Activated T-helper 1 cell treated with anti-CD3 and anti-CD28 coated beads, Interleukin-12 subunit alpha, Interleukin-12 subunit beta, Interleukin-2, Interleukin-4 antibody, amounts not matched to agents 30 ng/mL and 10 ng/mL and 1 ng/mL, durations not matched to agents 14 hours and 24 hours and 36 hours (primary cell): ENCODE measurements at regions of chr4 and their contacts with region 1.

Region 1: GRCh38 chr4:1512738-1513660 is 106.8 kb upstream of the NKX1-1 start:
- DNase-seq: peak; percentile 27
- H3K4me3 Mint-ChIP-seq: no peak overlapping the region
- H3K27ac Mint-ChIP-seq: no peak overlapping the region
- H3K4me1 Mint-ChIP-seq: no peaks in the 10 kb centered on the region
- H3K27me3 Mint-ChIP-seq: no peaks in the 10 kb centered on the region

Region 2: DNA sequence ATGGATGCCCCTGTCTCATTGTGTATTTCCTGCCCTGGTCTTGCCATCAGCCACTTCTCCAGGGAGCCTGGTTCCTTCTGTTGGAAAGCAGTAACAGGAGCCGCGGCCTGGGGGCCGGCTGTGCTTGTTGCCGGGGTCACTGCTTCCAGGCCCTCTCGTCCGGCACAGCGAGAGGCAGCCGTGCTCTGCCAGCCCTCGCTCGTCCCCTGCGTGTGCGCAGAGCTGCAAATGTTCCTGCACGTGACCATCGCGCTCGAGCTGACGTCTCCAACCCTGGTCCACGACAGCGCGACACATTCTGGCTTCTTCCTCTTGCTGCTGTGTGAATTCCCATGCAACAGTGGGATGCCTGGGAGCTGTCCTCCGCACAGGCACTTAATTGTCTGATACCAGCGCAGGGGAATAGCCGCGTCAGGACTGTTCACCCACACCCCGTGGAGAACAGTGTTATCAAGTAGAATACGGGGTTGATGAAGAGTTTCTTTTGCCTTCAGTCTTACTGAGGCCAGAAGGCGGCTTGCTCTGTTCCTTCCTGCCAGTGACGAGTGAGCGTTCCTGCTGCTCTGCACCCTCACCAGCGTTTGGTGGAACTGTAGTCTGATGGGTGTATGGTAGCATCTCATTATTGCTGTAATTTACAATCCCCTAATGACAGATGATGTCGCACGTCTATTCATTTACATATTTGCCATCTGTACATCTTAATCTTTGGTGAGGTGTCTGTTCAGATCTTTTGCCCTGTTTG is 875.3 kb before region 1 on chr4:
- intact Hi-C with region 1: no loop called
- DNase-seq: no peak
- H3K4me3 Mint-ChIP-seq: no peak overlapping the region
- H3K27ac Mint-ChIP-seq: no peak overlapping the region
- H3K4me1 Mint-ChIP-seq: no peaks in the 10 kb centered on the region
- H3K27me3 Mint-ChIP-seq: no peaks in the 10 kb centered on the region

Region 3: GRCh38 chr4:1043658-1044468 is 469.1 kb before region 1 on chr4:
- intact Hi-C with region 1: no loop called
- DNase-seq: no peak
- H3K4me3 Mint-ChIP-seq: no peak overlapping the region
- H3K27ac Mint-ChIP-seq: no peak overlapping the region
- H3K4me1 Mint-ChIP-seq: no peaks in the 10 kb centered on the region
- H3K27me3 Mint-ChIP-seq: peaks cover 15% of the 10 kb centered on the region

Region 4: DNA sequence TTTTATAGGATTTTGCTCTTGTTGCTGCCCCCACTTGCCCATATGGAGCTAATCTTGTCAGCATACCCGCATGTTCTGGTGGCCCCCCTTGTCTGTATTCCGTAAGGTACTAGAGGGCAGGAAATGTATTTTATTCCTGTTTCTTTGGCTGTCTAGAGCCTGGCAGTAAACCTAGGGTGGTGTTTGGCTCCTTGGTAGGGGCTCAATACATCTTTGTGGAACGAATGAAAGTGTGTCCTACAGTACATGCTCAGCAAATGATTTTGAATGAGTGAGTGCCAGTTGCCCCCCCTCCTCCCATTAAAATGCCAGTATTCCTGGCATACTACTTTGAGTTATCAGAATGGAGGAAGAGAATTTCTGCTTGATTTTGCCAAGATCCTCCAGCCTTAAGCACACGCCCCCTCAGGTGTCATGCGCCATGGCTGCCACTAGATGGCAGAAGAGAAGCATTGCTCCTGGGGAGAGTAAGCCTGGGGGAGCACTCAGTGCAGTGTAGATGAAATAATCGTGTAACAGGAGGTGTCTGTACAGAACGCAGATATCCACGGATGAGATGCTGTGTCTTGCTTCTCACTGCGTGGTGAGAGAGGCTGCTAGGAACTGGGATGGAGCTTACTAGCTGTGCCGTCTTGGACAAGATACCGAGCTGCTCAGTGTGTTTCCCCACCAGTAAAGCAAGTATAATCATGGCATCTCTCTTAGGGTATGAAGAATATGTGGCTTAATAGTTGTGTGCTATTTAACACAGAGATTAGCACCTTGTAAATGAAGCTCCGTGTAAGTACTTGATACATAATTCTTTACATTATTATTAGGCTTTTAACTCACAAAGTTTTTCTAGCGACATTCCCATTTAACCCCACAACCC is 382.4 kb before region 1 on chr4:
- intact Hi-C with region 1: loop called (anchors 1 kb)
- DNase-seq: peak; percentile 70
- H3K4me3 Mint-ChIP-seq: no peak overlapping the region
- H3K27ac Mint-ChIP-seq: no peak overlapping the region
- H3K4me1 Mint-ChIP-seq: peaks cover 5% of the 10 kb centered on the region
- H3K27me3 Mint-ChIP-seq: peaks cover 14% of the 10 kb centered on the region